Thyroid gland (tissue), 4 donors: ENCODE measurements at regions of chr7 and their contacts with region 1.

Region 1: GRCh38 chr7:35985126-35985754 is 167.8 kb upstream of the EEPD1 start:
- DNase-seq: peak; percentile 81 to 86
- H3K4me3 ChIP-seq: no peak overlapping the region
- H3K27ac ChIP-seq: no peak overlapping the region
- H3K4me1 ChIP-seq: peaks cover 0 to 4% of the 10 kb centered on the region in 2 donors
- H3K27me3 ChIP-seq: no peaks in the 10 kb centered on the region
- CTCF ChIP-seq: peak; percentile 81 to 97 (median 91)
- POLR2A ChIP-seq: no peak

Region 2: GRCh38 chr7:36291387-36292316 is 306.4 kb after region 1 on chr7:
- intact Hi-C with region 1: loop called (anchors 2 kb)
- DNase-seq: peak; percentile 81 to 85
- H3K4me3 ChIP-seq: no peak overlapping the region
- H3K27ac ChIP-seq: peak overlapping the region; percentile 52 to 60 (median 53)
- H3K4me1 ChIP-seq: peaks cover 0 to 15% of the 10 kb centered on the region in 2 donors
- H3K27me3 ChIP-seq: no peaks in the 10 kb centered on the region
- CTCF ChIP-seq: peak; percentile 89 to 99 (median 96)
- POLR2A ChIP-seq: no peak

Region 3: GRCh38 chr7:36315309-36316133 is 330.3 kb after region 1 on chr7:
- intact Hi-C with region 1: loop called (anchors 5 kb)
- DNase-seq: no peak
- H3K4me3 ChIP-seq: no peak overlapping the region
- H3K27ac ChIP-seq: no peak overlapping the region
- H3K4me1 ChIP-seq: no peaks in the 10 kb centered on the region
- H3K27me3 ChIP-seq: no peaks in the 10 kb centered on the region
- CTCF ChIP-seq: no peak
- POLR2A ChIP-seq: no peak